B cell (primary cell): ENCODE measurements at regions of chr4 and their contacts with region 1.

Region 1: GRCh38 chr4:40309250-40309774 is 25.8 kb upstream of the CHRNA9 start:
- DNase-seq: peak; percentile 91
- ATAC-seq: peak; percentile 16
- H3K4me3 ChIP-seq: peak overlapping the region in 3 of 5 experiments; percentile 17 to 41 (median 38)
- H3K4me3 Mint-ChIP-seq: peak overlapping the region; percentile 87
- H3K27ac ChIP-seq: peak overlapping the region; percentile 94 to 98
- H3K27ac Mint-ChIP-seq: peak overlapping the region; percentile 97
- H3K4me1 ChIP-seq: peaks cover 67 to 71% of the 10 kb centered on the region in 2 donors
- H3K4me1 Mint-ChIP-seq: peaks cover 73% of the 10 kb centered on the region
- H3K27me3 ChIP-seq: no peaks in the 10 kb centered on the region
- H3K27me3 Mint-ChIP-seq: no peaks in the 10 kb centered on the region
- CTCF ChIP-seq: peak; percentile 83

Region 2: GRCh38 chr4:39114436-39114835 is 1194.9 kb before region 1 on chr4:
- CTCF ChIA-PET with region 1: no interaction called
- POLR2A ChIA-PET with region 1: no interaction called
- intact Hi-C with region 1: no loop called
- DNase-seq: no peak
- ATAC-seq: no peak
- H3K4me3 ChIP-seq: no peak overlapping the region
- H3K4me3 Mint-ChIP-seq: no peak overlapping the region
- H3K27ac ChIP-seq: no peak overlapping the region
- H3K27ac Mint-ChIP-seq: no peak overlapping the region
- H3K4me1 ChIP-seq: peaks cover 5 to 7% of the 10 kb centered on the region in 2 donors
- H3K4me1 Mint-ChIP-seq: peaks cover 19% of the 10 kb centered on the region
- H3K27me3 ChIP-seq: no peaks in the 10 kb centered on the region
- H3K27me3 Mint-ChIP-seq: no peaks in the 10 kb centered on the region
- CTCF ChIP-seq: no peak

Region 3: GRCh38 chr4:39977489-39978377 is 331.6 kb before region 1 on chr4 and contains the start of gene PDS5A:
- CTCF ChIA-PET with region 1: interaction called, 3 read pairs
- POLR2A ChIA-PET with region 1: no interaction called
- intact Hi-C with region 1: loop called (anchors 5 kb)
- DNase-seq: peak; percentile 95
- ATAC-seq: peak; percentile 84
- H3K4me3 ChIP-seq: peak within 1 kb of the TSS; percentile 55 to 93 (median 83)
- H3K4me3 Mint-ChIP-seq: peak within 1 kb of the TSS; percentile 91
- H3K27ac ChIP-seq: peak within 1 kb of the TSS; percentile 71 to 83
- H3K27ac Mint-ChIP-seq: peak within 1 kb of the TSS; percentile 93
- H3K4me1 ChIP-seq: peaks cover 11 to 15% of the 10 kb centered on the region in 2 donors
- H3K4me1 Mint-ChIP-seq: peaks cover 31% of the 10 kb centered on the region
- H3K27me3 ChIP-seq: no peaks in the 10 kb centered on the region
- H3K27me3 Mint-ChIP-seq: no peaks in the 10 kb centered on the region
- CTCF ChIP-seq: peak; percentile 79
- total RNA-seq, gene PDS5A: 111 and 116 TPM in 2 replicates

Region 4: DNA sequence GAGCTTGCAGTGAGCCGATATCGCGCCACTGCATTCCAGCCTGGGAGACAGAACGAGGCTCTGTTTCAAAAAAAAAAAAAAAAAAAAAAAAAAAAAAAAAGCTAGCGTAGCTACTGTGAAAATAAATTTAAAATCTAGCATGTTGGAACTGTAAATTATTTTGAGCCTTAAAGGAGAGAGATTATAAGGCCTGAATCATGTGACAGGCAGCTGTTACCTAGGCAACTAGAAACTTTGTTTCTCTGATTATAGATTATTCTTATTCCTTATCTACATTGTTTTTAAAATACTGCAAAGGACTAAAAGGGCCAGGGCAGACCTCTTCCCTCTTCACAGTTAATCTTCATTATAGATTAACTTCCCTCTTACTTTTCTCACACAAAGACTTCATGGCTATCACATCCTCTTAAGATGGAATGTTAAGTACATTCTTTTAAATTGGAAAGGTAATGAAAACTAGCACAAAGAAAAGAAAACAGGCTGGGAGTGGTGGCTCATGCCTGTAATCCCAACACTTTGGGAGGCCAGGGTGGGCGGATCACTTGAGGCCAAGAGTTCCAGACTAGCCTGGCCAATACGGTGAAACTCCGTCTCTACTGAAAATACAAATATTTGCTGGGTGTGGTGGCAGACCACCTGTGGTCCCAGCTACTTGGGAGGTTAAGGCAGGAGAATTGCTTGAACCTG is 310.5 kb before region 1 on chr4:
- CTCF ChIA-PET with region 1: no interaction called
- POLR2A ChIA-PET with region 1: no interaction called
- intact Hi-C with region 1: no loop called
- DNase-seq: no peak
- ATAC-seq: no peak
- H3K4me3 ChIP-seq: no peak overlapping the region
- H3K4me3 Mint-ChIP-seq: no peak overlapping the region
- H3K27ac ChIP-seq: no peak overlapping the region
- H3K27ac Mint-ChIP-seq: no peak overlapping the region
- H3K4me1 ChIP-seq: no peaks in the 10 kb centered on the region
- H3K4me1 Mint-ChIP-seq: peaks cover under 1% of the 10 kb centered on the region
- H3K27me3 ChIP-seq: no peaks in the 10 kb centered on the region
- H3K27me3 Mint-ChIP-seq: no peaks in the 10 kb centered on the region
- CTCF ChIP-seq: no peak

Region 5: DNA sequence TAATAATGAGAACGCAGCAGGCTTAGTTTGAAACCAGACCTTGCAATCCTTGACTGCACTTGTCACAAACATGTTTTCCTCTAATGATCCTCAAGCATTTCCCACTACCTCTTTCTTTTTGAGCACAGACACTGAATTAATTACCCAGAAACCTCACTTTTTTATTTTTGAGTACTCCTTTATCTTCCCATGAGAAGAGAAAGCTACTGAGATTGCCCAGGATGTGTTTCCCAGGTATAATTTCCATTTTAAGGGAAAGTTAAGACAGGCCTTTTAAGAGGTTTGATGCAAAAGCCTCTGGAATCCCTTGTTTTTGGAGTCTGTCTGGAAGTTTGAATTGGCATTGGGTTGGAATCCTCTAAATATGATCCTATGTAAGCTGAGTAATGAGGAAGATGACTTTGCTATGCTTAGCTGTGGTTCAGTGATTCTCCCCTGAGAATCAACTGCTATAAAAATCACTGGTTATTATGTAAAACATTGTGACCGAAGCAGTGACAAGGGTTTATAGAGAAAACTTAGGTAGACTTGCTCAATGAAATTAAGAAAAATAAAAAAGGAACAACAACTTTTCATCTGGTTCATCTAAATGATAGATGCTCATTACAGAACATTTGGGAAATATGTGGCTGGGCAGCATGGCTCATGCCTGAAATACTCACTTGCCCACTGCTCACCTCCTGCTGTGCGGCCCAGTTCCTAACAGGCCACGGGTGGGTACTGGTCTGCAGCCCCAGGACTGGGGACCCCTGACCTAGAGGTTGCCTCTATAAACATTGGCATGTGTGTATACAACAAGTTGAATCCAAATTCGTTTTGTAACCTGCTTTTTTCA is 123.3 kb before region 1 on chr4:
- CTCF ChIA-PET with region 1: interaction called, 93 read pairs
- POLR2A ChIA-PET with region 1: interaction called, 6 read pairs
- intact Hi-C with region 1: loop called (anchors 1 kb)
- DNase-seq: peak; percentile 87
- ATAC-seq: peak; percentile 79
- H3K4me3 ChIP-seq: peak overlapping the region; percentile 11 to 61 (median 37)
- H3K4me3 Mint-ChIP-seq: peak overlapping the region; percentile 85
- H3K27ac ChIP-seq: peak overlapping the region; percentile 92 to 94
- H3K27ac Mint-ChIP-seq: peak overlapping the region; percentile 97
- H3K4me1 ChIP-seq: peaks cover 60 to 88% of the 10 kb centered on the region in 2 donors
- H3K4me1 Mint-ChIP-seq: peaks cover 76% of the 10 kb centered on the region
- H3K27me3 ChIP-seq: no peaks in the 10 kb centered on the region
- H3K27me3 Mint-ChIP-seq: no peaks in the 10 kb centered on the region
- CTCF ChIP-seq: no peak

Region 6: DNA sequence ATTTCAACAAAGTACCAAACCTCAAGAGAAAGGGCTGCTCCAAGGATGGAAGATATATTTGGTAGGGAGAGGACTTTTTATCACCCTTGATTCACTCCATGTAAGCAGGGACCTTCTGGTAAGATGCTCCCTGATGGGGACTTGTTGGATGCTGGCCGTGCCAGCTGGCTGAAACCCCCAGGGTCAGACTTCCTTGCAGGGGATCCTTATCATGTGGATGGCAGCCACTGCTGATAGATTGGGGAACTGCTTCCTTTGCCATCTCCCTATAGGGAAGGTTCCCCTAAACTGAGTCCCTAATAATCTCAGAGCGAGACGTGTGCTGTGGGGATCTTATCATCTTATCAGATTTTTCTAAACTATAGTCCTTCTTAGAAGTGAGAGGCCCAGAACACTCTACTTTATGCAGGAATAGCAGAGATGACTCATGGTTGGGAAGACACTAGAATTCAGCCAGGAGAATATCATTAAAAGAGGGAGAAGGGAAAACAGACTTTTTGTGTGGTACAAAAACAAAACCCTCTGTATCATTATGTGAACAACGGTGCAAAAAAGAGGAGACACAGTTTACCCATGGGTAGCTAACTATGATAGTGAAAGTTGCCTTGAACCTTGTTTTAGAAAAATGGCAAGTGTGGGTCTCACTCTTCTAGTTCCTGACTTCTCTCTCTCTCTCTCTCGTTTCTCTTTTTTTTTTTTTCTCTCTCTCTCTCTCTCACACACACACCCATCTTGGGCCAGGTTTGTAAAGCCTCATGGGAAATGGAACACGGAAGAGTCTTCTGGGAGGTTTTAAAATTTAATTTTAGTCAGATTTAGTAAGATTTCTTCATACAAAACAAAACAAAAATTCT is 96.4 kb before region 1 on chr4:
- CTCF ChIA-PET with region 1: interaction called, 47 read pairs
- POLR2A ChIA-PET with region 1: interaction called, 3 read pairs
- intact Hi-C with region 1: no loop called
- DNase-seq: no peak
- ATAC-seq: no peak
- H3K4me3 ChIP-seq: no peak overlapping the region
- H3K4me3 Mint-ChIP-seq: peak overlapping the region; percentile 53
- H3K27ac ChIP-seq: peak overlapping the region in 1 of 2 donors; percentile 73
- H3K27ac Mint-ChIP-seq: peak overlapping the region; percentile 82
- H3K4me1 ChIP-seq: peaks cover 80 to 94% of the 10 kb centered on the region in 2 donors
- H3K4me1 Mint-ChIP-seq: peaks cover 92% of the 10 kb centered on the region
- H3K27me3 ChIP-seq: no peaks in the 10 kb centered on the region
- H3K27me3 Mint-ChIP-seq: no peaks in the 10 kb centered on the region
- CTCF ChIP-seq: no peak

Region 7: GRCh38 chr4:40247350-40247749 is 62.0 kb before region 1 on chr4:
- CTCF ChIA-PET with region 1: interaction called, 22 read pairs
- POLR2A ChIA-PET with region 1: interaction called, 6 read pairs
- intact Hi-C with region 1: loop called (anchors 1 kb)
- DNase-seq: peak; percentile 65
- ATAC-seq: peak; percentile 80
- H3K4me3 ChIP-seq: no peak overlapping the region
- H3K4me3 Mint-ChIP-seq: peak overlapping the region; percentile 20
- H3K27ac ChIP-seq: peak overlapping the region; percentile 1 to 69
- H3K27ac Mint-ChIP-seq: peak overlapping the region; percentile 76
- H3K4me1 ChIP-seq: peaks cover 55 to 60% of the 10 kb centered on the region in 2 donors
- H3K4me1 Mint-ChIP-seq: peaks cover 63% of the 10 kb centered on the region
- H3K27me3 ChIP-seq: no peaks in the 10 kb centered on the region
- H3K27me3 Mint-ChIP-seq: no peaks in the 10 kb centered on the region
- CTCF ChIP-seq: no peak

Region 8: DNA sequence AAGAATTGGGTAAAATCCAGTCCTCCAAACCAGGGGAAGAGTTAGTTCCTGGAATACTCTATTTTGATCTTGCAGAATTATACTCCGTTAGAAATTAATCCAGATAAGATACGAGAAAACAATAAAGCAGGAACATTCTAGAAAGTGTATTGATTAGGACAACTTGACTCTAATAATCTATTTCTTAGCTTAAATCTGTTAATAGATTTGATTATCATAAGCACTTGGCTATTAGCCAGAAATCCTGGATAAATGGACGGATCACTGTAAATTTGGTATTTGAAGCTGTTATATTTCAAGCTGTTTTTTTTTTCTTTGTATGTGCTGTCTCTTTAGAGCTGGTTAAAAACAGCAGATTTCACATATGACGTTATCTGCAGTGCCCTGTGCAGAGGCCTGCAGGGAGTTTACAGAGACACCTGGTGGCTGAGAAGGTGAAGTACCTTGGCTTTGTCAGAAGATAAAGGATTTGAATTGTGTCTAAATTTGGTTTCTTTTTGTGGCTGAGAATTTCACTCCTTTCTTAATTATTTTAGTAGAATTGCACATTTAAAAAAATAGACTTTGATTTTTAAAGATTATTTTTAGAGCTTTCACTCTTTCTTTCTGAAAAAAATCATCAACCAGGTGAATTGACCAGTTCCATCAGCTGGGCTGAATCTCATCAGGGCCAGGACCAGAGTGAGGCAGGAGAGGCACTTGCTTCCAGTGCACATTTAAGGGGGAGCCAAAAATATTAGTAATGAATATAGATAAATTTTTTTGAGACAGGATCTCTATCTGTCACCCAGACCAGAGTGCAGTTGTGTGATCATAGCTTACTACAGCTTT is 16.1 kb after region 1 on chr4:
- CTCF ChIA-PET with region 1: interaction called, 100 read pairs
- POLR2A ChIA-PET with region 1: interaction called, 3 read pairs
- intact Hi-C with region 1: no loop called
- DNase-seq: peak; percentile 81
- ATAC-seq: peak; percentile 100
- H3K4me3 ChIP-seq: no peak overlapping the region
- H3K4me3 Mint-ChIP-seq: no peak overlapping the region
- H3K27ac ChIP-seq: no peak overlapping the region
- H3K27ac Mint-ChIP-seq: peak overlapping the region; percentile 46
- H3K4me1 ChIP-seq: peaks cover 8 to 14% of the 10 kb centered on the region in 2 donors
- H3K4me1 Mint-ChIP-seq: peaks cover 18% of the 10 kb centered on the region
- H3K27me3 ChIP-seq: peaks cover 0 to 4% (median 0%) of the 10 kb centered on the region in 4 experiments
- H3K27me3 Mint-ChIP-seq: peaks cover 8% of the 10 kb centered on the region
- CTCF ChIP-seq: peak; percentile 96

Region 9: GRCh38 chr4:40388239-40388985 is 79.1 kb after region 1 on chr4:
- CTCF ChIA-PET with region 1: no interaction called
- POLR2A ChIA-PET with region 1: no interaction called
- intact Hi-C with region 1: no loop called
- DNase-seq: no peak
- ATAC-seq: no peak
- H3K4me3 ChIP-seq: no peak overlapping the region
- H3K4me3 Mint-ChIP-seq: no peak overlapping the region
- H3K27ac ChIP-seq: no peak overlapping the region
- H3K27ac Mint-ChIP-seq: no peak overlapping the region
- H3K4me1 ChIP-seq: no peaks in the 10 kb centered on the region
- H3K4me1 Mint-ChIP-seq: no peaks in the 10 kb centered on the region
- H3K27me3 ChIP-seq: no peaks in the 10 kb centered on the region
- H3K27me3 Mint-ChIP-seq: no peaks in the 10 kb centered on the region
- CTCF ChIP-seq: no peak